Psoas muscle (tissue), 8 donors: ENCODE measurements at regions of chr11 and their contacts with region 1.

Region 1: DNA sequence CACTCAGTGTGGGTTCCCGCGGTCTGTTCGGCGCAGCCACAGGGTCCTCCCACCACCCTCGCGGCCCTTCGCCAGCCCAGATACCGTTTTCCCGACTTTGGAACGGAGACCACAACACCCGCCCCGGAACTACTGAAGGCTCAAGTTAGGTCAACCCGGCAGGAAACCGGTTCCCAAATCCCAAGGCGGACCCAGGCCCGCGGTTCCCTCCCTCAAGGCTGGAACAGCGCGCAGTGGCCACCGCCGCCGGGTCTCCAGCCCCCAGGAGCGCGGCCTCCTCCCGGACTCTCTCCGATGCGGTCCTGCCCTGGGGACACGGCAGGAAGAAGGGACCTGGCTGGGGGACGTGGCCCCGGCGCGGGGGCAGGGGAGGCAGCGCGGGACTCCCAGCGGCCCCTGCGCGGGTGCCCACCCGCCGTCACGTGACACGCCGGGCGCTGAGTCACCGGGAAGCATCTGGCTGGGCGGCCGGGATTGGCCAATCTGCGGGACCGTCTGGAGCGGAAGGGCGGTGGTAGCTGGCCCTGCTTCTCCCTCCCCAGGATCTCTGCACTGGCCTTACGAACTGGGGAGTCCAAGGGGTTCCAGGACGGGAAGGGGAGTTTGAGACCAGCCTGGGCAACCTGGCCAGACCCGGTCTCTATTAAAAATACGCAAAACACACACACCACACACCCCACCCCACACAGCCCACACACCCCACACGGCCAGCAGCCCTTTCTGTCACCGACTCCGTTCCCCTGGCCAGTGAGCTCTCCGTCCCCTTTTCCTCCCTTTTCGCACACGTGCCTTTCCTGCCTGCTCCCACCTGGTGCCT is 21.5 kb upstream of the MALAT1 start:
- DNase-seq: peak; percentile 98 to 99
- ATAC-seq: peak; percentile 76 to 83 (median 80)
- H3K4me3 ChIP-seq: peak overlapping the region; percentile 77
- H3K27ac ChIP-seq: peak overlapping the region; percentile 99
- H3K4me1 ChIP-seq: peaks cover 65% of the 10 kb centered on the region
- H3K27me3 ChIP-seq: no peaks in the 10 kb centered on the region
- CTCF ChIP-seq: no peak

Region 2: DNA sequence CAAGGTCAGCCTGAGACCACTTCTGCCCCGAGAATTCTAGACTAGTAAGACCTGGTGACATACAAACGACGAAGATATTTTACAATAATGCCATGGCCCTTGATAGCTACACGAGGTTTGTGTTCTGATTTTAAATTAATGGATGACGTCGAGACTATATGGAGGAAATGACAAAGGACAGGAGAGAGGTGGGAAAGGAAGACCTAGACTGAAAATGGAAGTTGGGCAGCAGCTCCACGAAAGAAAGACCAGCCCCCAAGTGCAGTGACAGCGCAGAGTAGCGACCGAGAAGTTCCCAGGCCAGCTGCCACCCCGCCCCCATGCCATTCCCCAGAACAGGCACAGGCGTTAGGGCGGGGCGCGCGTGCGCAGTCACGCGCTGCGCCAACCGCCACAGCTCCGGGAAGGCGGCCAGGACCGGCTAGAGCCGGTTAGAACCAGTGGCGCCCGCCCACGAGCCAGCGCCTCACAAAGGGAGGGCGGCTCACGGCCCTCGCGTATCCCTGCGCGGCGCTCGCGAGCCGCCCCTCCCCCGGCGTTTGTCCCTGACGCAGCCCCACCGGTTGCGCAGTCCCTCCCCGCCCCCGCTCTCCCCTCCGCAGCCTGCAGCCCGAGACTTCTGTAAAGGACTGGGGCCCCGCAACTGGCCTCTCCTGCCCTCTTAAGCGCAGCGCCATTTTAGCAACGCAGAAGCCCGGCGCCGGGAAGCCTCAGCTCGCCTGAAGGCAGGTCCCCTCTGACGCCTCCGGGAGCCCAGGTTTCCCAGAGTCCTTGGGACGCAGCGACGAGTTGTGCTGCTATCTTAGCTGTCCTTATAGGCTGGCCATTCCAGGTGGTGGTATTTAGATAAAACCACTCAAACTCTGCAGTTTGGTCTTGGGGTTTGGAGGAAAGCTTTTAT is 20.0 kb after region 1 on chr11:
- intact Hi-C with region 1: loop called (anchors 1 to 2 kb)
- DNase-seq: peak; percentile 99
- ATAC-seq: peak; percentile 75 to 81 (median 76)
- H3K4me3 ChIP-seq: peak overlapping the region; percentile 92
- H3K27ac ChIP-seq: peak overlapping the region; percentile 99
- H3K4me1 ChIP-seq: peaks cover 43% of the 10 kb centered on the region
- H3K27me3 ChIP-seq: no peaks in the 10 kb centered on the region
- CTCF ChIP-seq: no peak

Region 3: GRCh38 chr11:65720237-65720934 is 243.0 kb after region 1 on chr11 and contains the start of gene RNASEH2C:
- intact Hi-C with region 1: no loop called
- DNase-seq: peak; percentile 86 to 93
- ATAC-seq: peak; percentile 91 to 96 (median 94)
- H3K4me3 ChIP-seq: peak within 1 kb of the TSS; percentile 95
- H3K27ac ChIP-seq: peak within 1 kb of the TSS; percentile 83
- H3K4me1 ChIP-seq: peaks cover 15% of the 10 kb centered on the region
- H3K27me3 ChIP-seq: no peaks in the 10 kb centered on the region
- CTCF ChIP-seq: no peak
- total RNA-seq, gene RNASEH2C: 17.5 to 38.4 (median 28.1) TPM